Dendritic cell treated with granulocyte-macrophage colony-stimulating factor and Interleukin-4, amounts not matched to agents 40 ng/mL and 50 ng/mL, for 4 days (primary cell): ENCODE measurements at regions of chr2 and their contacts with region 1.

Region 1: GRCh38 chr2:11583840-11584524 is 50.1 kb downstream of the GREB1 start:
- H3K4me3 Mint-ChIP-seq: no peak overlapping the region
- H3K27ac Mint-ChIP-seq: no peak overlapping the region
- H3K4me1 Mint-ChIP-seq: peaks cover 7% of the 10 kb centered on the region
- H3K27me3 Mint-ChIP-seq: peaks cover 15% of the 10 kb centered on the region

Region 2: GRCh38 chr2:11477994-11478393 is 106.0 kb before region 1 on chr2:
- intact Hi-C with region 1: loop called (anchors 1 kb)
- H3K4me3 Mint-ChIP-seq: no peak overlapping the region
- H3K27ac Mint-ChIP-seq: no peak overlapping the region
- H3K4me1 Mint-ChIP-seq: peaks cover 9% of the 10 kb centered on the region
- H3K27me3 Mint-ChIP-seq: peaks cover 51% of the 10 kb centered on the region